Activated CD4-positive, alpha-beta memory T cell treated with anti-CD3 and anti-CD28 coated beads for 36 hours (primary cell): ENCODE measurements at regions of chr15 and their contacts with region 1.

Region 1: DNA sequence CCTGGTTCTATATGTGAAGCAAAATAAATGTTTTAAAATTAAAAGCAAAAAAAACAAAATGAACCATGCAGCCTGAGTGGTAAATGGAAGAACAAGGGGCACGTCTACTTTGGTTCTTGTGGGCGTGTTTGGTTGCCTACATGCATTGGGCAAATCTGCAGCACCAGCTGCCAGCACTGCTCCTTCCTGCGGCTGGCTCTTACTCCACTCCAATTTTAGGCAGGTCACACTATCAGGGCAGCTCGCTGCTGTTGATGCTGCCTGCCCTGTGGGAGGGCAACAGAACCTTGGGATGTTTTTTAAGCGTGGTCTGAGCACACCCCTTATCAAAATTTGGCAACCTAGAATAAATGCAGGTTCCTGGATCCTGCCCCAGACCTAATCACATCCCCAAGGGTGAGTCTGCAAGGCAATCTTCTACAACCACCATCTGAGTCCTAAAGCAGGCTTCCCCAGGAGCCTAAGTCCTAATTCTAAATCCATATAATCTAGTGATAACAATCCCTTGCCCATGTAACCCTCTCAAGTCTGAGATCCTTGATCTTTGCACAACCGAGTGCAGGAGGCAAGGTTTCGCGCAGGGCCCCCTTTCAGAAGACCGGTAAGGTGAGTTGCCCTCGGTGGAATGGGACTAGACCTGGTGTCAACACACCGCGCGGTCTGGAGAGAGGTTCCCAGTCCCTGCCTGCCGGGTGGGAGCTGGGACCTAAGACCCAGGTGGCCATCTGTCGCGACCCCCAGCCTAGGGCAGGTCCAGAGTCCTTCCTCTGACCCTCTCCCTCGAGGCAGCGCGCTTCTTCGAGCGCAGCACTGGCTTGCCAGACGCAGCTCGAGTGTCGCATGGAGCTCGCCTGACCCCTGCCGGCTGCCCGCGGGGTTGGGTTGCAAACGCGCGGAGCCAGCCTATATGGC is 15.9 kb downstream of the IVD start:
- DNase-seq: peak; percentile 87
- H3K4me3 Mint-ChIP-seq: no peak overlapping the region
- H3K27ac Mint-ChIP-seq: no peak overlapping the region
- H3K4me1 Mint-ChIP-seq: no peaks in the 10 kb centered on the region
- H3K27me3 Mint-ChIP-seq: no peaks in the 10 kb centered on the region

Region 2: DNA sequence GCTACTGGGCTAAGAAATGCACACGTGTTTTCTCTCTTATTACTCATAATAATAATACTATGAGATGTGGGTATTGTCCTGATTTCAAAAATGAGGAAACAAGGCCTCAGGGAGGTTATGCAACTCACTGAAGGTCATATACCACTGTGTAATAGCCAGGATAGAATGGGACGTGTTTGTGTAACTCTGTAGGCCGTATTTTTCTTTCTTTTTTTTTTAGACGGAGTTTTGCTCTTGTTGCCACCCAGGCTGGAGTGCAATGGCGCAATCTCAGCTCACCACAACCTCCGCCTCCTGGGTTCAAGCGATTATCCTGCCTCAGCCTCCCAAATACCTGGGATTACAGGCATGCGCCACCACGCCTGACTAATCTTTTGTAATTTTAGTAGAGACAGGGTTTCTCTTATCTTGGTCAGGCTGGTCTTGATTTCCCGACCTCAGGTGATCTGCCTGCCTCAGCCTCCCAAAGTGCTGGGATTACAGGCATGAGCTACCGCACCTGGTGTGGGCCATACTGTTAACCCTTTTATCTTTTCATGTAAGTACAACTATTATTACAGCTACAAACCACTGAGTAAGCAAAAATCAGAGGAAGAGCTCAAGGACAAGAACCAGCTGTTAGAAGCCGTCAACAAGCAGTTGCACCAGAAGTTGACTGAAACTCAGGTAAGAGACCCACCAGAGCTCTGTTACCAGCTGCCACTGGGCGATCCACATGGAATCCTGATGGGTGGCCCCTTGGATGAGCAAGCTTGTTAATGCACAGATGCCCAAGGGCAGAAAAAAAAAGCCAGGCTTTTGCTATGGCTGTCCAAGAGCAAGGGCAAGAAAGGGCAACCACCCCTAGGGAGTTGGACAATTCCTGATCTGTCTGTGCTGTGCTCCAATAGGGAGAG is 32.3 kb before region 1 on chr15:
- CTCF ChIA-PET with region 1: interaction called, 11 read pairs
- POLR2A ChIA-PET with region 1: no interaction called
- intact Hi-C with region 1: no loop called
- DNase-seq: no peak
- H3K4me3 Mint-ChIP-seq: no peak overlapping the region
- H3K27ac Mint-ChIP-seq: no peak overlapping the region
- H3K4me1 Mint-ChIP-seq: peaks cover 5% of the 10 kb centered on the region
- H3K27me3 Mint-ChIP-seq: no peaks in the 10 kb centered on the region